ENCODE measurements at regions of chr6 and their contacts with region 1.

Region 1: GRCh38 chr6:24991810-24992467 is 56.2 kb upstream of the RIPOR2 start:
- DNase-seq: peak; percentile 68
- CTCF ChIP-seq: peak; percentile 79

Region 2: DNA sequence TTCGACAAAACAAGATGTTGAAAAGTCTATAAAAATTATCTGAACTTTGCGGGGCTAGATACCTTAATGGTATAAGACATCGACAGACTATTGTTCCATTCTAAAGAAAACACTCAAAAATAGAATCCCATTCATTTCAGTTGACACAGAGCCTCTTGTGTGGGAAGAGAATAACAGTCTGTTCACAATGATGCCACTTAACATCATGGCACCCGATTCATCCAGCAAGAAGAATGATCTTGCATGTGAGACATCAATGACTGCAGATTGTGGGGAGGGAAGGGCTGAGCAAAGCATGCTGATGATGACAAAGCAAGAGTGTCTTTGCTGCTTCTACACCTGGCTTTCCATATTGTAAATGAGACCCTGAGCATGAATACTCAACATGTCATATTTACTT is 143.5 kb before region 1 on chr6:
- CTCF ChIA-PET with region 1: interaction called, 29 read pairs
- POLR2A ChIA-PET with region 1: no interaction called
- DNase-seq: no peak
- CTCF ChIP-seq: no peak

Region 3: DNA sequence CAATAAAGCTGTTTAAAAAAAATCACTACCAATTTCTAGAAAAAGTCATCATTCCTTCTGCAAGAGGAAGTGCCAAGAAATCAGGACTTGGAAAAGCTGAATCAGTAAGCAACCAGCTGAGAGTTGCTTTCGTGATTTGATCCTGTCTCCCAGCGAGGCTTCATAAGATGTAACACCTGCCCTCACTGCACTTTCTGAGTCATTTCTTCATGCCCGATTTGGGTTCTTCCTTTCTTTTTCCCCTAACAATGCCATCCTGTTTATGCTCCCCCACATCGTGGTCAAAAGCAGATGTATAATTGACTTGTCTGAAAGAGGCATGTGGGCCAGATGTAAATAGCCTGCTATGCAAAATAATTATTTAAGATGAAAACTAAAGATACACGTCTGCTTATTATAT is 108.3 kb before region 1 on chr6:
- CTCF ChIA-PET with region 1: interaction called, 27 read pairs
- POLR2A ChIA-PET with region 1: no interaction called
- DNase-seq: no peak
- CTCF ChIP-seq: no peak

Region 4: GRCh38 chr6:24919004-24919892 is 72.7 kb before region 1 on chr6:
- CTCF ChIA-PET with region 1: interaction called, 20 read pairs
- POLR2A ChIA-PET with region 1: no interaction called
- DNase-seq: no peak
- CTCF ChIP-seq: no peak

Region 5: GRCh38 chr6:24974182-24975171 is 17.5 kb before region 1 on chr6:
- CTCF ChIA-PET with region 1: interaction called, 74 read pairs
- POLR2A ChIA-PET with region 1: no interaction called
- DNase-seq: no peak
- CTCF ChIP-seq: no peak

Region 6: GRCh38 chr6:25027221-25027916 is 35.4 kb after region 1 on chr6:
- CTCF ChIA-PET with region 1: interaction called, 29 read pairs
- POLR2A ChIA-PET with region 1: no interaction called
- DNase-seq: peak; percentile 87
- CTCF ChIP-seq: peak; percentile 79